Tibial artery (tissue), 4 donors: ENCODE measurements at regions of chr17 and their contacts with region 1.

Region 1: GRCh38 chr17:58517734-58518609 is 3.5 kb upstream of the MTMR4 start:
- DNase-seq: peak; percentile 100
- H3K4me3 ChIP-seq: peak overlapping the region; percentile 61 to 85
- H3K27ac ChIP-seq: peak overlapping the region; percentile 94 to 97
- H3K4me1 ChIP-seq: peaks cover 0 to 50% (median 33%) of the 10 kb centered on the region in 4 donors
- H3K27me3 ChIP-seq: no peaks in the 10 kb centered on the region
- CTCF ChIP-seq: no peak

Region 2: DNA sequence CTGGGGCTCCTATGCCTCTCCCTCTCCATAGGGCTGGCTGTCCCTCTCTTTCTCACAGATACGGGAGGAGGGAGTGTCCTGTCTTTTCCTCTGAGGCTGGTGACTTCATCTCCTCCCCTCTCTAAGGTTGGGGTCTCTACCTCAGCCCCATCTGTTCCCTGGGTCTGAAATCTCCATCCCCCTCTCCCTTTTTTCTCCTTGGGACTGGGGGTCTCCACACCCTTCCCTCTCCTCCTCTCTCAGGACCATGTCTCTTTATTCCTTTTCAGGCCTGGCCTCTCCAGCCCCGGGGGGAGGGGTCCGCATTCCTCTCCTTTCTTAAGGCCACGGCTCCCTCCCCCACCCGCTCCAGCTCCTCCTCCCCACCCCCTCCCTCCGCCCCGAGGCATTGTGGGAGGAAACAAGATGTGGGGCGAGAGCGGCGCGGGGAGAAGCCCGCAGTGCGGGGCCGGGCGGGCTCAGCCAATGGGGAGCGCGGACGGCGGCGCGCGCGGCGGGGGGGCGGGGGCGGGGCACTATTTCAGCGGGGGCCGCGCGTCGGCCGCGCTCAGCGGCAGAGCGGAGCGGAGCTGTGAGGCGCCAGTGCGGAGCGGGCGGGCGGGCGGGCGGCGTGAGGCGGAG is 435.0 kb before region 1 on chr17 and contains the start of gene DYNLL2:
- intact Hi-C with region 1: loop called (anchors 10 kb)
- DNase-seq: peak; percentile 89 to 94
- H3K4me3 ChIP-seq: peak within 1 kb of the TSS; percentile 83 to 96
- H3K27ac ChIP-seq: peak within 1 kb of the TSS; percentile 92 to 96
- H3K4me1 ChIP-seq: peaks cover 0 to 41% (median 32%) of the 10 kb centered on the region in 4 donors
- H3K27me3 ChIP-seq: no peaks in the 10 kb centered on the region
- CTCF ChIP-seq: no peak

Region 3: DNA sequence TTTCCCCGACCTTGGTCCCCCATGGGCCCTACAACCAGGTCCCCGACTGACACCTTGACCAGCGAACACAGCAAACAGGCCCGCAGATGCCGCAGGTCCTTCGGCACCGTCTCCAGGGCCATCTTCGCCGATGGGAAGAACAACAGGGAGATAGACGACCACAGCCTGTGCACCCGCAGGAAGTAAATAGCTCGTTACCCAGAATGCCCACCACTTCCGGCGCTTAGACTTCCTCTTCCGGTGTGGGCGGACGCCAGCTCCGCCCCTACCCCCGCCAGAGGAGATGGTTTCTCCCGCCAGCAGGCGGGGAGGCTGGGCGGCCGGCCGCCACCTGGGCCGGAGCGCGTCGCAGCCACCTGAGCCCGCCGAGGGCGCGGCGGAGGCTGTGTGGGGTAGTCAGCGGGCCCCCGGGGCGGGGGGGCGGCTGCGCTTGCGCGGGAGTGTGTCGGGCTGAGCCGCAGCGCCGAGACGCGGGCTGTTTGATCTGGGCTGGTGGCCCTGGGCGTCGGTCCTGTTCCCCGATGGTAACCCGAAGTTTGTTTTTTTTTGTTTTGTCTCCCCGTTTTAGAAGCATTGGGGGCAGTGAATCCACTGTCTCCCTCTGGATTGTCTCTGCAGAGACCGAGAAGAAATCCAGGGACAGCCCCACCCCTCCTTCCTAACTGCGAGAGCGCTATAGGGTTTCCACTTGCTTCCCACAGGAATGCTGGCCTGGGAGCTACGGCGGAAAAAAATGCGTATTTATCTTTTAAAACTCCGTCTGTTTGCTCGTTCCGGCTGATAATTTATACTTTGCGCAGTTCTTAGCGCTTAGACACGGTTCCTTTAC is 165.7 kb before region 1 on chr17 and contains the start of gene SUPT4H1:
- intact Hi-C with region 1: loop called (anchors 10 kb)
- DNase-seq: peak; percentile 79 to 93
- H3K4me3 ChIP-seq: peak within 1 kb of the TSS; percentile 77 to 84
- H3K27ac ChIP-seq: peak within 1 kb of the TSS; percentile 94
- H3K4me1 ChIP-seq: peaks cover 0 to 23% (median 13%) of the 10 kb centered on the region in 4 donors
- H3K27me3 ChIP-seq: no peaks in the 10 kb centered on the region
- CTCF ChIP-seq: peak; percentile 5 to 25

Region 4: DNA sequence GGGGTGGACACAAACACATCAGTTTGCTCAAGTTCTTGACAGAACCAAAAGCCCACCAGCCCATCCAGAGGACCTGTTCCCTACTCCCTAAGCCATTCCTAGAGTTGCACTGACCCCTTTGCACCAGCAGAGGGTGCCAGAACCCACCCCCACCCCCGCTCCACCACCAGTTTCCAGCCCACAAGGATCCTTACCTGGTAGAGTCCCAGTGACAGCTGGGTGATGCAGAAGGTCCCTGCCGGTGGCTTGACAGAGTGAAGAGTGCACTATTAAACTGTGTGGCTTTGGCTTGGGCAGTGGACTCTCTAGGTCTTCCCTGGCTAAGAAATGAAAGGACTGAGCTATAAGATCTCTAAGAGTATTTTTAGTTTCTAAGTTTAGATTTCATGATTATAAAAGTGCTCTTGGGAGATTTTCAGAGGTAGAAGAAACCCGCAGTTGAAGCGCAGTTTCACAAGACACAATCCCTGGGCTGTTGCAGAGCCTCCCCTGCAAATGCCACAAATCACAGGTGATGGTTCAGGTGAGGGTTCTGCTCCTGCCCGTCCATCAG is 69.8 kb after region 1 on chr17:
- intact Hi-C with region 1: loop called (anchors 10 kb)
- DNase-seq: peak; percentile 29 to 67
- H3K4me3 ChIP-seq: no peak overlapping the region
- H3K27ac ChIP-seq: no peak overlapping the region
- H3K4me1 ChIP-seq: no peaks in the 10 kb centered on the region
- H3K27me3 ChIP-seq: no peaks in the 10 kb centered on the region
- CTCF ChIP-seq: peak; percentile 72 to 91

Region 5: GRCh38 chr17:58692239-58693055 is 174.5 kb after region 1 on chr17 and contains the start of gene RAD51C:
- intact Hi-C with region 1: loop called (anchors 10 kb)
- DNase-seq: peak; percentile 66 to 88
- H3K4me3 ChIP-seq: peak within 1 kb of the TSS; percentile 62 to 78
- H3K27ac ChIP-seq: peak within 1 kb of the TSS; percentile 80 to 86
- H3K4me1 ChIP-seq: peaks cover 0 to 17% (median 7%) of the 10 kb centered on the region in 4 donors
- H3K27me3 ChIP-seq: no peaks in the 10 kb centered on the region
- CTCF ChIP-seq: no peak

Region 6: DNA sequence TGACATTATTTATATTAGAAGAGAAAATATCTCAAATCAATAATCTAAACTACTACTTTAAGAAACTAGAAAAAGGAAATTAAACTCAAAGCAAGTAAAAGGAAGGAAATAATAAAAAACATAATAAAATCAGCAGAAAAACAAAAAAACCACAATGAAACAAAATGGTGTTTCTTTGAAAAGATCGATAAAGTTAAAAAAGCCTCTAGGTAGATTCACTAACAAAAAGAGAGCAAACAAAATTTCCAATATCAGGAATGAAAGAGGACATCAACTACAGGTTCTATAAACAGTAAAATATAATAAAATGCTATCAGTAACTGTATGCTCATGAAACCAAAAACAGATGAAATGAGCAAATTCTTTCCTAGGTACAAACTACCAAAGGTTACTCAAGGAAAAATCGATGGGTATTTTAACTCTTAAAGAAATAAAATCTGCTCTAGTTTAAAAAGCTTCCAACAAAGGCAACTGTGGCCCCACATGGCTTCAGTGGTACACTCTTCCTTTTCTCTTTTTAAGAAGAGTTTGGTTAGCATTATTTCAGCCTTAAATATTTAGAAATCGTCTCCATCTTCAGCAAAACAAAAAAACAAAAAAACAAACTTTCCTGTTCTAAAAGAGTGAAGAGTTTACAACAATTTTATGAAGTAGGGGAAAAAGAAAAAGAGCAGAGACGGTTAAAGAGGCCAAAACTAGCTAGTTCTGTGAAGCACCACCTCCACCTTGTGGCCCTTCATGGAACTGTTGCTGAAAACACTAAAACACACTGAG is 486.6 kb after region 1 on chr17:
- intact Hi-C with region 1: loop called (anchors 10 kb)
- DNase-seq: peak in 1 of 2 donors; percentile 63
- H3K4me3 ChIP-seq: no peak overlapping the region
- H3K27ac ChIP-seq: no peak overlapping the region
- H3K4me1 ChIP-seq: peaks cover 0 to 7% (median 0%) of the 10 kb centered on the region in 4 donors
- H3K27me3 ChIP-seq: no peaks in the 10 kb centered on the region
- CTCF ChIP-seq: peak; percentile 90 to 94